Activated T-helper 2 cell treated with anti-CD3 and anti-CD28 coated beads, Interferon-gamma antibody, Interleukin-2, Interleukin-4, amounts not matched to agents 10 μg/mL and 5 μg/mL and 100 μg/mL, durations not matched to agents 14 hours and 24 hours and 36 hours (primary cell): ENCODE measurements at regions of chr2 and their contacts with region 1.

Region 1: DNA sequence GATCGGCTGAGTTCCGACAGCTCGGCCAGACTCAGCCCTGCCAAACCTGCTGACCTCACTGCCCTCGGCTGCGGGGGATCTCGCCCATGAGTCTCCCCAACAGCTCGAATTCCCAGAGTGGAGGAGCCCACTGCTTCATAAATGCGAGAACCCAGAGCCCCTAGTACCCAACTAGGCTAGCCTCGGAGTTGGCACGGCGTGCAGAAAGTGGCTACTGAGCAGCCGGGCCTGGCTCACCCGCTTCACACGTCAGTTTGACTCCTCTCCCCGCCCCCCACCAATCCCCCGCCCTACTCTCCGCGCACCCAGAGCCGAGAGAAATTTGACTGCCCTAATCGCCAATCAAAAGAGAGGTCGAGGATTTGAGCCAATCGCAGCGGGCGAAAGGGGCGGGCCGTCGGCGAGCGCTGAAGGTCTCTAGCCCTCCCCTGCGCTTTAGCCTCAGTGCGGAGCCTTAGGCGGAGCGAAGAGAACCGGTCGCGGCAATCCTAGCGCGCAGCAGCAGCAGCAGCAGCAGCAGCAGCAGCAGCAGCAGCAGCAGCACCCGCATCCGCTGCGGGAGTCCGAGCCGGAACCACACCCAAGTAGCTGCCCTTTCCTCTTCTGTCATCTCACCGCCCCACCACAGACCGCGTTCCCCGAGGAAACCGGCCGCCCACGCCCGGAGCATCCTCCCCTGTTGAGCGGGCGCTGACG is at the start of gene GLS:
- DNase-seq: peak; percentile 95
- H3K4me3 Mint-ChIP-seq: peak within 1 kb of the TSS; percentile 91
- H3K27ac Mint-ChIP-seq: peak within 1 kb of the TSS; percentile 97
- H3K4me1 Mint-ChIP-seq: peaks cover 35% of the 10 kb centered on the region
- H3K27me3 Mint-ChIP-seq: no peaks in the 10 kb centered on the region
- total RNA-seq, gene GLS: 195 and 201 TPM in 2 replicates

Region 2: GRCh38 chr2:190408538-190409271 is 471.8 kb before region 1 on chr2:
- intact Hi-C with region 1: loop called (anchors 5 kb)
- DNase-seq: peak; percentile 61
- H3K4me3 Mint-ChIP-seq: peak overlapping the region; percentile 86
- H3K27ac Mint-ChIP-seq: peak overlapping the region; percentile 91
- H3K4me1 Mint-ChIP-seq: peaks cover 36% of the 10 kb centered on the region
- H3K27me3 Mint-ChIP-seq: no peaks in the 10 kb centered on the region

Region 3: GRCh38 chr2:190679813-190680591 is 200.5 kb before region 1 on chr2:
- intact Hi-C with region 1: loop called (anchors 2 kb)
- DNase-seq: peak; percentile 29
- H3K4me3 Mint-ChIP-seq: peak overlapping the region; percentile 51
- H3K27ac Mint-ChIP-seq: peak overlapping the region; percentile 92
- H3K4me1 Mint-ChIP-seq: peaks cover 45% of the 10 kb centered on the region
- H3K27me3 Mint-ChIP-seq: no peaks in the 10 kb centered on the region

Region 4: DNA sequence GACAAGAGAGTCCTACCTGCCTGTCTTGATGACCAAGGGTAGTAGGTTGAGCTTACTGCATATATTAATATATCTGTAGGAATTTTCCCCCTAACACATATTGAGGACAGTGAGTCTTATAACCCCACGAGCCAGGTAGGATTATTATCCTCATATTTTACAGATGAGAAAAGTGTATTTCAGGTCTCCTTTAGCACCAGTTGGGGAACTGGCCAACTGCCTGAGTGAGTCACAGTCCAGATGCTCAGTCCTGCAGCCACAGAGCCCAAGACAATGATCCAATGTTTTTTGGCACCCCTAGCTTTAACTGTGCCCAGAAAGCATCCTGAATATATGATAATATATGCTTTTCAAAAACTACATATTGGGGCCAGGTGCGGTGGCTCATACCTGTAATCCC is 30.8 kb before region 1 on chr2:
- intact Hi-C with region 1: loop called (anchors 1 kb)
- DNase-seq: no peak
- H3K4me3 Mint-ChIP-seq: no peak overlapping the region
- H3K27ac Mint-ChIP-seq: no peak overlapping the region
- H3K4me1 Mint-ChIP-seq: peaks cover 17% of the 10 kb centered on the region
- H3K27me3 Mint-ChIP-seq: no peaks in the 10 kb centered on the region

Region 5: DNA sequence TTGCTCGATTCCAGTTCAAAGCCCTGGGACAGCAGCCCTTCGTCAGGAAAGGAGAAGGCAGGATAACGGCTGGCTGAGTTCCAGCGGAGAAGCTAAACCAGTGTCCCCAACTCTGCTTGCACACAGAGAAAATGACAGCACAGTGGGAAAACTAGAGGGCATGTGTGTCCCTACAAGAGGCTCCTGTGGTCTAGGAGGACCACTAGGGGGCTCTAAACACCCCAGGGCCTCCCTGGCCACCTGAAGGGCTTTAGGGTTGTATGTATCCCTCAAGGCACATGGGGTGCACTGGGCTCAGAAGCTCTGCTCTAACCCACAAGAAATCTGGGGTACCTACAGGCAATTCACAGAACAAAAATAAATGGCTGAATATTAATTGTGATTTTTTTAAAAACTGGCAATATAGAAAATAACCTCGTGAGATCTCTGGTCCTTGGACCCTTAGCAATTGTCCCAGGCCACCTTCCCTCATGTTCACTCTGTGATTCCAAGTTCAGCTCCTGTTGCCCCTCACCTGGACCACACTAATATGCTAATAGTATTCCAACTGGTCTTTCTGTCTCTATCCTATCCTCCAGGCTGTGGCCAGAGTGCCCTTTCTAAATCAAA is 115.9 kb after region 1 on chr2:
- intact Hi-C with region 1: no loop called
- DNase-seq: no peak
- H3K4me3 Mint-ChIP-seq: no peak overlapping the region
- H3K27ac Mint-ChIP-seq: peak overlapping the region; percentile 77
- H3K4me1 Mint-ChIP-seq: peaks cover 59% of the 10 kb centered on the region
- H3K27me3 Mint-ChIP-seq: no peaks in the 10 kb centered on the region

Region 6: DNA sequence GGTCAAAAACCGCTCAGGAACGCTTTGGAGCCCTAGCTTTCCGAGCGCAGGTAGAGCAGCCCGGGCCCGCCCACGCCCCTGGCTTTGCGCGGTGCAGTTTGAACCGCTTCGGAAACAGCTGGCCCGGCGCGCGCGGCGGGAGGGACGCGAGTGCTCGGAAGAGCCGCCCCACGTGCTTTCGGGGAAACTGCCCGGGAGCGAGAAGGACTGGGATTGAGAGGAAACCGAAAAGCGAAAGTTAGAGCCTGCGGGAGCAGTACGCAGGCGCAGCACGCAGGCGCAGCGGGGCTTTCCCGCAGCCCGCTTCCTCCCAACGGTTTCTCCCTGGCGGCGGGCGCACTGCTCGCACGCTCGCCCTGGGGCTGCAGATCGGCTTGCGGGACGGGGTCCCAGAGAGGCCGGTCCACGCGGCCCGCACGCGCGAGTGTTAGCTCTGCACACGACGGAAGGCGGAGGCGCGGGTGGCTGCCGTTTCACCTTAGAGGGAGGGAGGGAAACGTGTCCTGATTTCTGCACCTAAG is 139.8 kb after region 1 on chr2:
- intact Hi-C with region 1: loop called (anchors 2 kb)
- DNase-seq: peak; percentile 96
- H3K4me3 Mint-ChIP-seq: no peak overlapping the region
- H3K27ac Mint-ChIP-seq: no peak overlapping the region
- H3K4me1 Mint-ChIP-seq: peaks cover 35% of the 10 kb centered on the region
- H3K27me3 Mint-ChIP-seq: no peaks in the 10 kb centered on the region

Region 7: DNA sequence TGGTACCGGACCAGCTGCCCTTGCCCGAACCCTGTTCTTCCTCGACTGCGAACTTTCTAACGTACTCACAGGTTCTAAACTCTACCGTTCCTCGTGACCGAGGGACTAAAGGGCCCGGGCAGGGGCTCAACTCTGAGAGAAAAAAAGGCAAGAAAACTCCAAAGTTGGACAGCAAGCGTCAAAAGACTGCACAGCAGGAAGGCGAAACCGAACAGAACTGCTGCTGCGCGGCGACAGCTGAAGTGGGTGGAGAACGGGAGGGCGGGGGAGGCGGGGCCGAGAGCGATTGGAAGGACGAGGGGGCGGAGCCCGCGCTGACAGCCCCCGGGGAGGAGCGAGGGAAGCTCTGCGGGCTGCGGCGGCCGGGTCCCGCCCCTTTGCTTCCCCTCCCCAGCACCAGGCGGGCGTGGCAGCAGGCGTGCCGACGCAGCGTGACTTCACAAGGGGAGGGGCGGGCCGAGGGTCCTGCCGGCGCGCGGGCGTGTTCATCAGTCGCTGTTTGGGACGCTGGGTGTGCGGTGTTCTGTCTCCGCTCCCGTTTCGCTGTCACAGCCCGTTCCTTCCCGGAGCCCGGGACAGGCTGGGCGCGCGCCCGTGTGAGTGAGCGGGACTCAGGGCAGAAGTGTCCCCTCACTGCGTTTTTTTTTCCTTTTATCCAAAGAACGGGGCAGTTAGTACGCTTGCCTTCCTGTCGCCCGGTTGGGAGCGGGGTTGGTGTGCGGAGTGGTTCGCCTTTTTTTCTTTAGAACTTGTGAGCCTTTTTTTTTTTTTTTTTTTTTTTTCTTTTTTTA is 797.3 kb after region 1 on chr2 and contains the start of gene NABP1:
- intact Hi-C with region 1: loop called (anchors 1 kb)
- DNase-seq: peak; percentile 97
- H3K4me3 Mint-ChIP-seq: peak within 1 kb of the TSS; percentile 84
- H3K27ac Mint-ChIP-seq: peak within 1 kb of the TSS; percentile 99
- H3K4me1 Mint-ChIP-seq: peaks cover 51% of the 10 kb centered on the region
- H3K27me3 Mint-ChIP-seq: no peaks in the 10 kb centered on the region
- total RNA-seq, gene NABP1: 39.9 and 40.0 TPM in 2 replicates